GM12878 (cell line): ENCODE measurements at regions of chr22 and their contacts with region 1.

Region 1: GRCh38 chr22:41951898-41952474 is at the start of gene SMIM45:
- DNase-seq: no peak
- ATAC-seq: peak; percentile 35
- H3K4me3 ChIP-seq: no peak within 1 kb of the TSS
- H3K27ac ChIP-seq: no peak within 1 kb of the TSS
- H3K4me1 ChIP-seq: peaks cover 41% of the 10 kb centered on the region
- H3K27me3 ChIP-seq: no peaks in the 10 kb centered on the region
- CTCF ChIP-seq: peak in 1 of 3 experiments; percentile 19; a peak in 2 of 6 replicates
- EP300 ChIP-seq: no peak
- POLR2A ChIP-seq: no peak
- RAD21 ChIP-seq: no peak

Region 2: GRCh38 chr22:41925655-41926460 is 26.1 kb before region 1 on chr22:
- CTCF ChIA-PET with region 1: interaction called, 7 read pairs
- POLR2A ChIA-PET with region 1: interaction called, 164 read pairs
- RAD21 ChIA-PET with region 1: interaction called, 68 read pairs
- SMC1A ChIA-PET with region 1: interaction called, 31 read pairs
- in situ Hi-C with region 1: no loop called
- intact Hi-C with region 1: no loop called
- DNase-seq: no peak
- ATAC-seq: peak; percentile 59
- H3K4me3 ChIP-seq: peak overlapping the region; percentile 97
- H3K27ac ChIP-seq: peak overlapping the region; percentile 93
- H3K4me1 ChIP-seq: peaks cover 53% of the 10 kb centered on the region
- H3K27me3 ChIP-seq: no peaks in the 10 kb centered on the region
- CTCF ChIP-seq: peak; percentile 78 to 87 (median 79)
- EP300 ChIP-seq: no peak
- POLR2A ChIP-seq: peak; percentile 54; the same call in 1 of the 2 replicates
- RAD21 ChIP-seq: peak; percentile 50

Region 3: DNA sequence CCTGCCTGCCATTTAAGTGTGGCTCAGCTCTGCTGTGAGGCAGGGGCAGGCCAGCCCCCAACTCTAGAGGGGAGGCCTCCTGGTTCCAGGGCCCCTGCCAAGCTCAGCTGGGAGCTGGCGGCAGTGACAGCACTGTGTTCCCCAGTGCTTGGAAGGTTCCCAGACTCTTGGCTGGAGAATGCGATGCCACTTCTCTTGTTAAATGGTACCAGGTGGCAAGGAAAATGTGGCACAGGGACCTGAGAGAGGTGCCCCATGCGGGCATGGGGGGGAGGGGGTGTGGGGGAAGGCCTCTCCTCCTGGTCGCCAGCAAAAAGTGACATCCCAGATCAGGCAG is 17.0 kb before region 1 on chr22:
- CTCF ChIA-PET with region 1: interaction called, 27 read pairs
- POLR2A ChIA-PET with region 1: interaction called, 145 read pairs
- RAD21 ChIA-PET with region 1: interaction called, 115 read pairs
- SMC1A ChIA-PET with region 1: interaction called, 19 read pairs
- in situ Hi-C with region 1: no loop called
- intact Hi-C with region 1: no loop called
- DNase-seq: no peak
- ATAC-seq: no peak
- H3K4me3 ChIP-seq: no peak overlapping the region
- H3K27ac ChIP-seq: peak overlapping the region; percentile 94; the same call in 1 of the 2 replicates
- H3K4me1 ChIP-seq: peaks cover 80% of the 10 kb centered on the region
- H3K27me3 ChIP-seq: no peaks in the 10 kb centered on the region
- CTCF ChIP-seq: no peak
- EP300 ChIP-seq: no peak
- POLR2A ChIP-seq: no peak
- RAD21 ChIP-seq: no peak

Region 4: GRCh38 chr22:42114721-42115120 is 162.7 kb after region 1 on chr22:
- CTCF ChIA-PET with region 1: interaction called, 5 read pairs
- POLR2A ChIA-PET with region 1: interaction called, 3 read pairs
- RAD21 ChIA-PET with region 1: interaction called, 5 read pairs
- SMC1A ChIA-PET with region 1: interaction called, 5 read pairs
- in situ Hi-C with region 1: no loop called
- intact Hi-C with region 1: loop called (anchors 5 kb)
- DNase-seq: no peak
- ATAC-seq: peak; percentile 19; the same call in 1 of the 3 replicates
- H3K4me3 ChIP-seq: no peak overlapping the region
- H3K27ac ChIP-seq: no peak overlapping the region
- H3K4me1 ChIP-seq: no peaks in the 10 kb centered on the region
- H3K27me3 ChIP-seq: no peaks in the 10 kb centered on the region
- CTCF ChIP-seq: peak in 2 of 3 experiments; percentile 20 to 34; a peak in 3 of 6 replicates
- EP300 ChIP-seq: no peak
- POLR2A ChIP-seq: no peak
- RAD21 ChIP-seq: peak; percentile 17; the same call in 1 of the 2 replicates